ENCODE measurements at regions of chr7 and their contacts with region 1.

Region 1: DNA sequence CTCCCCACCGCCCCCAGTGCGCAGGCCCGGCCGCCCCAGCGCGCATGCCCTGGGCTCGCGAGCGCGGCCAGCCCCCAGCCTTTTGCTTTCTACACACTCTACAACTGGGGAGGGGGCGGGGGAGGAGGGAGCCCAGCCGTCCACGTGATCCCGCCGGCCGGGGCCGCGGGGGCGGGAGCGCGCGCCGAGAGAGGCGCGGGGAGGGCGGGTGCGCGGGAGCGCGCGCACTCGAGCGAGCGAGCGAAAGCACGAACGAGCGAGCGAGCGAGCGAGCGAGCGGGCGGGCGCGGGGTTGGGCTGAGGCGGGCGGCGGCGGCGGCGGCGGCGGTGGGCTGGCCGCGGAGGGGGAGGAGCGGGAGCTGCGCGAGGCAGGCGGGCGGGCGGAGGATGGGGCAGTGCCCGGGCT is at the start of gene AUTS2:
- DNase-seq: peak; percentile 73 to 75
- ATAC-seq: peak; percentile 68 to 84 (median 79)
- H3K4me3 ChIP-seq: peak within 1 kb of the TSS; percentile 96
- H3K4me3 Mint-ChIP-seq: peak within 1 kb of the TSS; percentile 95
- H3K27ac ChIP-seq: peak within 1 kb of the TSS; percentile 76
- H3K27ac Mint-ChIP-seq: peak within 1 kb of the TSS in 1 of 2 donors; percentile 72
- H3K4me1 ChIP-seq: peaks cover 34% of the 10 kb centered on the region
- H3K4me1 Mint-ChIP-seq: peaks cover 5 to 14% of the 10 kb centered on the region in 2 donors
- H3K27me3 ChIP-seq: peaks cover 5% of the 10 kb centered on the region
- H3K27me3 Mint-ChIP-seq: peaks cover 0 to 3% of the 10 kb centered on the region in 2 donors
- CTCF ChIP-seq: no peak
- total RNA-seq, gene AUTS2: 147 to 197 (median 155) TPM

Region 2: DNA sequence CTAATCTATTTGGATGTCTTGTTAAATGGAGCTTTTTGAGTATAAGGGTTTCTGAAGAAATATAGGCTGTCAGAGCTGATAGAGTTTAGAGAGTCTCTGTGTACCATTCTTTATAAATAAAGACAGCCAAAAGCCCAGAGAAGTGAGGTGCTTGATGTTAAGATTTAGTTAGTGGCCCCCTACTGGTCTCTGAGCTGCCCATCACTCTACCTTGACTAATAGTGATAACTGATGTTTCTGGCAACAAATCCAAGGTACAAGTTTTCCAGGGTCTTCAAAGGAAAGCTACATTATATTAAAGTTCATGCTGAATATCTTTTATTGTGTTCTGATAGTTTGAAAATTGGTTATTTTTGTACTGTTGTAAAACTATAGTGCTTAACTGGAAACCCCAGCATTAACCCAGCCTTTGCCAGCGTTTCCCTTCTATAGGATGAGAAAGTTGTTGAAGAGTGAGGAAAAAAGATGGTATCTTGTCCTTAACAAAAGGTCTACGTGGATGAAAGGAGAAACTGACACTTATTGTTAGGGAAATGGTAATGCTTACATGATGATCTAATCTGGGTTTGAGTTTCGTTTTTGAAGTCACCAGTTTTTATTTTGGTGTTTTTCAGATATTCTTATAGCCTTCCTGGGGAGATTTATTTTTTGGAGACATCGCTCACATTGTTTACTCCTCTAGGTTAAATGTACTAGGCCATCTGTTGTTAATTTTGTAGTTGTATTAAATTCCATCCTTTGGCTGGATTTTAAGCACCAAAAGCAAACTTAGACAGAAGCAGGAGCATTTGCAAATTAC is 79.2 kb after region 1 on chr7:
- intact Hi-C with region 1: loop called (anchors 5 kb)
- DNase-seq: no peak
- ATAC-seq: peak in 2 of 3 donors; percentile 48 to 50
- H3K4me3 ChIP-seq: no peak overlapping the region
- H3K4me3 Mint-ChIP-seq: peak overlapping the region; percentile 22
- H3K27ac ChIP-seq: no peak overlapping the region
- H3K27ac Mint-ChIP-seq: peak overlapping the region in 1 of 2 donors; percentile 44
- H3K4me1 ChIP-seq: no peaks in the 10 kb centered on the region
- H3K4me1 Mint-ChIP-seq: peaks cover 18 to 22% of the 10 kb centered on the region in 2 donors
- H3K27me3 ChIP-seq: no peaks in the 10 kb centered on the region
- H3K27me3 Mint-ChIP-seq: no peaks in the 10 kb centered on the region
- CTCF ChIP-seq: peak; percentile 19

Region 3: DNA sequence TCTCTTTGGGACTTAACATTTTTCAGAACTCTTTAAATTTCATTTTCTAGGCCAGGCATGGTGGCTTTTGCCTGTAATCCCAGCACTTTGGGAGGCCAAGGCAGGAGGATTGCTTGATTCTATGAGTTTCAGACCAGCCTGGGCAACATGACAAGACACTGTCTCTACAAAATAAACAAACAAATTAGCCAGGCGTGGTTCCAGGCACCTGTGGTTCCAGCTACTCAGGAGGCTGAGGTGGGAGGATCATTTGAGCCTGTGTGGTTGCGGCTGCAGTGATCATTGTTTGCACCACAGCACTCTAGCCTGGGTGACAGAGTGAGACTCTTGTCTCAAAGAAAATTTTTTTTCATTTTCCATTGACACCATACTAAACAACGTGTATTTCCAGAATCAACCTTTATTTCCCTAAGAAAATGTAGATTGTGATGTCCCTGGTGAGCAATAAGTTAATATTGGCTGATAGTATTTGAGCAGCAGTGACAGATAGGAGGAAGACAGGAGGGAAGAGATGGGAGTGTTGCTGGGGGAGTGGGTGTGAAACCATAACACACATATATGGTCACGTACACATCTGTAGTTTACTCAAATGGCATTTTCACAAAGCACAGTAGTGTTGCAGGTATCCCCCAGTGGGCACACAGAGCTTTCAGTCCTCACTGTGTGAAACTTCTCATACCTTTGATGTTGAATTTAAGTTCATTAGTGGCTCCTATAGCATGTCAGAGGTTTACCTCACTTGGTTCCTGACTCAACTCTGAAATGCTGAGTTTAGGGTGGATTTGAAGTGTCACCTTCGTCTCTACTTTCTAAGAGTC is 205.8 kb after region 1 on chr7:
- intact Hi-C with region 1: loop called (anchors 5 kb)
- DNase-seq: peak in 1 of 2 donors; percentile 17
- ATAC-seq: peak; percentile 49 to 80 (median 72)
- H3K4me3 ChIP-seq: no peak overlapping the region
- H3K4me3 Mint-ChIP-seq: peak overlapping the region; percentile 47
- H3K27ac ChIP-seq: no peak overlapping the region
- H3K27ac Mint-ChIP-seq: peak overlapping the region; percentile 29 to 76
- H3K4me1 ChIP-seq: peaks cover 11% of the 10 kb centered on the region
- H3K4me1 Mint-ChIP-seq: peaks cover 29 to 35% of the 10 kb centered on the region in 2 donors
- H3K27me3 ChIP-seq: no peaks in the 10 kb centered on the region
- H3K27me3 Mint-ChIP-seq: no peaks in the 10 kb centered on the region
- CTCF ChIP-seq: no peak

Region 4: GRCh38 chr7:69825113-69825616 is 227.1 kb after region 1 on chr7:
- intact Hi-C with region 1: loop called (anchors 10 kb)
- DNase-seq: peak in 1 of 2 donors; percentile 7
- ATAC-seq: no peak
- H3K4me3 ChIP-seq: peak overlapping the region; percentile 59
- H3K4me3 Mint-ChIP-seq: peak overlapping the region; percentile 87
- H3K27ac ChIP-seq: peak overlapping the region; percentile 82
- H3K27ac Mint-ChIP-seq: peak overlapping the region; percentile 83 to 91
- H3K4me1 ChIP-seq: peaks cover 12% of the 10 kb centered on the region
- H3K4me1 Mint-ChIP-seq: peaks cover 31 to 41% of the 10 kb centered on the region in 2 donors
- H3K27me3 ChIP-seq: no peaks in the 10 kb centered on the region
- H3K27me3 Mint-ChIP-seq: no peaks in the 10 kb centered on the region
- CTCF ChIP-seq: no peak

Region 5: GRCh38 chr7:70060298-70061068 is 462.4 kb after region 1 on chr7:
- intact Hi-C with region 1: loop called (anchors 5 kb)
- DNase-seq: peak; percentile 28 to 34
- ATAC-seq: peak; percentile 79 to 91 (median 90)
- H3K4me3 ChIP-seq: no peak overlapping the region
- H3K4me3 Mint-ChIP-seq: peak overlapping the region; percentile 70
- H3K27ac ChIP-seq: no peak overlapping the region
- H3K27ac Mint-ChIP-seq: peak overlapping the region; percentile 63 to 73
- H3K4me1 ChIP-seq: peaks cover 18% of the 10 kb centered on the region
- H3K4me1 Mint-ChIP-seq: peaks cover 48 to 50% of the 10 kb centered on the region in 2 donors
- H3K27me3 ChIP-seq: no peaks in the 10 kb centered on the region
- H3K27me3 Mint-ChIP-seq: peaks cover 6 to 13% of the 10 kb centered on the region in 2 donors
- CTCF ChIP-seq: no peak